Right cardiac atrium (tissue), 5 donors: ENCODE measurements at regions of chr9 and their contacts with region 1.

Region 1: GRCh38 chr9:92781923-92782322 is 17.3 kb upstream of the BICD2 start:
- DNase-seq: no peak
- ATAC-seq: no peak
- H3K4me3 ChIP-seq: no peak overlapping the region
- H3K27ac ChIP-seq: no peak overlapping the region
- H3K4me1 ChIP-seq: no peaks in the 10 kb centered on the region
- H3K27me3 ChIP-seq: no peaks in the 10 kb centered on the region

Region 2: GRCh38 chr9:92176068-92176799 is 605.7 kb before region 1 on chr9:
- intact Hi-C with region 1: no loop called
- DNase-seq: no peak
- ATAC-seq: no peak
- H3K4me3 ChIP-seq: no peak overlapping the region
- H3K27ac ChIP-seq: no peak overlapping the region
- H3K4me1 ChIP-seq: no peaks in the 10 kb centered on the region
- H3K27me3 ChIP-seq: no peaks in the 10 kb centered on the region

Region 3: GRCh38 chr9:92650839-92651621 is 130.9 kb before region 1 on chr9:
- intact Hi-C with region 1: loop called in 1 of 4 experiments (anchors 10 kb)
- DNase-seq: peak; percentile 70 to 92 (median 89)
- ATAC-seq: peak; percentile 79 to 92
- H3K4me3 ChIP-seq: no peak overlapping the region
- H3K27ac ChIP-seq: peak overlapping the region; percentile 79
- H3K4me1 ChIP-seq: peaks cover 9% of the 10 kb centered on the region
- H3K27me3 ChIP-seq: no peaks in the 10 kb centered on the region